ENCODE measurements at regions of chr12 and their contacts with region 1.

Region 1: GRCh38 chr12:27821259-27821973 is 41.4 kb upstream of the MANSC4 start:
- DNase-seq: peak; percentile 28
- H3K4me3 Mint-ChIP-seq: no peak overlapping the region
- H3K27ac Mint-ChIP-seq: no peak overlapping the region
- H3K4me1 Mint-ChIP-seq: peaks cover 43% of the 10 kb centered on the region
- H3K27me3 Mint-ChIP-seq: peaks cover 33% of the 10 kb centered on the region

Region 2: GRCh38 chr12:27367078-27367477 is 454.3 kb before region 1 on chr12:
- CTCF ChIA-PET with region 1: no interaction called
- POLR2A ChIA-PET with region 1: no interaction called
- intact Hi-C with region 1: no loop called
- DNase-seq: no peak
- H3K4me3 Mint-ChIP-seq: no peak overlapping the region
- H3K27ac Mint-ChIP-seq: no peak overlapping the region
- H3K4me1 Mint-ChIP-seq: no peaks in the 10 kb centered on the region
- H3K27me3 Mint-ChIP-seq: peaks cover 5% of the 10 kb centered on the region

Region 3: DNA sequence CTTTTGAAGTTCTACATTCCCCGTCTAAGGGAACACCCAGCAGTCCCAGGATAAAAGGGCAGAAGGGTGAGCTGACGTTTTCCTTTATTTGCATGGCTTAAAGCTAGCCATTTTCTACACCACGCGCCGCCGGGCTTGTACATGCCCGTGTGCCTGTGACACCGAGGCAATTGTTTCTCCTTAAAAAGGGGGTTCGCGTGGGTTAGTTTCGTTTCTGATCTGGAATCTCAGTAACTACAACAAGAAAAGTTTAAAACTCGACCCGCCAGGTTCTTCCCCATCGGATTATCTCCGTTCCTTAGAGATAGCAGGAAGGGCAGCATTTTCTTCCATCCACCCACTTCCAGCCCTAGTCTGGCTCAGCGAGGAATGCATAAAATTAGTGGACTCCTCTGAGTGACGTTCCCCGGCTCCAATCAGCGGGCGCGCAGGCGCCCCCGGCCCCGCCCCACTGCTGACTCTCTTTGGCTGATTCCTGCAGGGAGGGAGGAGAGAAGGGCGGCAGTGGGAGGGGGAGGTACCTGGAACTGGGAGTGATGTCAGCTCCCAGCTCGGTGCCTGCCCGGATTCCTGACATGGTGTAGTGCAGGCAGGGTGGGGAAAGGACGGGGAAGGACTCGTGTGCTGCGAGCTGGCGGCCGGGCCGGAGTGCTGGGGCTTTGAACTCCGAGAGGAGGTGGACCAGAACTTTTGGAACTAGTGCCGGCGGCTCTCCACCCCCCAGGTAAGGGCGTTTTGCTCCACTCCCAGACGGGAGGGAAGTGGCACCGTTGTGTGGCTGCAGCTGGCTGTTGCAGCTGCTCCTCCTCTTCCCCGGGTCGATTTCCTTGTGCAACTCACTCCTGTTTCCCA is 297.5 kb before region 1 on chr12 and contains the start of gene PPFIBP1:
- CTCF ChIA-PET with region 1: no interaction called
- POLR2A ChIA-PET with region 1: no interaction called
- intact Hi-C with region 1: loop called (anchors 5 kb)
- DNase-seq: peak; percentile 99
- H3K4me3 Mint-ChIP-seq: peak within 1 kb of the TSS; percentile 93
- H3K27ac Mint-ChIP-seq: peak within 1 kb of the TSS; percentile 79
- H3K4me1 Mint-ChIP-seq: peaks cover 18% of the 10 kb centered on the region
- H3K27me3 Mint-ChIP-seq: peaks cover 8% of the 10 kb centered on the region
- total RNA-seq, gene PPFIBP1: 14.1 to 14.9 TPM

Region 4: GRCh38 chr12:27785882-27786570 is 35.4 kb before region 1 on chr12:
- CTCF ChIA-PET with region 1: interaction called, 21 read pairs
- POLR2A ChIA-PET with region 1: interaction called, 3 read pairs
- intact Hi-C with region 1: loop called (anchors 1 kb)
- DNase-seq: no peak
- H3K4me3 Mint-ChIP-seq: no peak overlapping the region
- H3K27ac Mint-ChIP-seq: peak overlapping the region; percentile 69
- H3K4me1 Mint-ChIP-seq: peaks cover 45% of the 10 kb centered on the region
- H3K27me3 Mint-ChIP-seq: no peaks in the 10 kb centered on the region

Region 5: GRCh38 chr12:27861428-27862167 is 40.2 kb after region 1 on chr12:
- CTCF ChIA-PET with region 1: interaction called, 11 read pairs
- POLR2A ChIA-PET with region 1: interaction called, 6 read pairs
- intact Hi-C with region 1: loop called (anchors 1 kb)
- DNase-seq: peak; percentile 24
- H3K4me3 Mint-ChIP-seq: no peak overlapping the region
- H3K27ac Mint-ChIP-seq: no peak overlapping the region
- H3K4me1 Mint-ChIP-seq: peaks cover 20% of the 10 kb centered on the region
- H3K27me3 Mint-ChIP-seq: peaks cover under 1% of the 10 kb centered on the region

Region 6: DNA sequence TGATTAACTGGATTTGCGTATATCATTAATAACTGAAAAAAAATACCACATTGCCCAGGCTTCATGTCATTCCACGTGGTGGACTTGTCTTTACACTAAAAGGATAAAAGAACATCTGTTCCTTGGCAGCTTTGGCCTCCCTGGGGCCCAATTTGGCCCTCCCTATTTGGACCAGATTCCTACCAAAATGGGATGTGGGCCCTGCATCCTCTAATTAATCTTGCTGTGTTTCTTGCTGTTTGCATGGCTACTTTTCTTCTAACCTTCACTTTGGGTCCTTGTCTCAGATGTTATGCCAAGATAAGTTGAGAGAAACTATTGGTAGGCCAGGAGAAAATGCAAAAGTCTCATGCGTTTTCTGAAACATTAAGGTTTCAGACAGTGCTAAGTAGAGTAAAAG is 93.6 kb after region 1 on chr12:
- CTCF ChIA-PET with region 1: no interaction called
- POLR2A ChIA-PET with region 1: no interaction called
- intact Hi-C with region 1: no loop called
- DNase-seq: no peak
- H3K4me3 Mint-ChIP-seq: no peak overlapping the region
- H3K27ac Mint-ChIP-seq: no peak overlapping the region
- H3K4me1 Mint-ChIP-seq: no peaks in the 10 kb centered on the region
- H3K27me3 Mint-ChIP-seq: peaks cover 6% of the 10 kb centered on the region

Region 7: GRCh38 chr12:28114488-28114887 is 293.1 kb after region 1 on chr12:
- CTCF ChIA-PET with region 1: no interaction called
- POLR2A ChIA-PET with region 1: no interaction called
- intact Hi-C with region 1: no loop called
- DNase-seq: no peak
- H3K4me3 Mint-ChIP-seq: no peak overlapping the region
- H3K27ac Mint-ChIP-seq: no peak overlapping the region
- H3K4me1 Mint-ChIP-seq: no peaks in the 10 kb centered on the region
- H3K27me3 Mint-ChIP-seq: no peaks in the 10 kb centered on the region

Region 8: DNA sequence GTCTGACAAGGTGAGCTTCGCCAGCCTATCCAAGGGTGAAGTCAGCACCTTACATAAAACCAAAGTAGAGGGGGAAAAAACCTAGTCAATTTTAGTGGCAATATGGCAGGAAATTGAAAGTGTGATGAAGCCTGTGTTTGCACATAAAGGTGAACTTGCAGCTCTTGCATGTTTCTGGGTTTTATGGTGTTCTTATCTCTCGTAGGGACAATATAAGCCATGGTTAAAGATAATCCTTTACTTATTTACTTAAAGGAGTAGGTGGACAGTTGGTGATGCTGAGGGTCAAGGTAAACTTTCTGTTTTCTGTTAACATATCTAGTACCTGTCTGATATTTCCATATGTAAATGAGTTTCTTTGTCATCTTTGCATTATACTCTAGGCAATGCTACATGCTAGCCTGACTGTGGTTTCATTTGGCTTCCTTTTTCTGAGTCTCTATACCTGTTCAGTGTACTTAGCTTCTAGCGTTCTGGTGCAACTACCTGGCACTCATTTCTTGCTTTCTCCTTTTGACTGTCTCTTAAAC is 401.7 kb after region 1 on chr12:
- CTCF ChIA-PET with region 1: no interaction called
- POLR2A ChIA-PET with region 1: no interaction called
- intact Hi-C with region 1: loop called (anchors 1 kb)
- DNase-seq: peak; percentile 16
- H3K4me3 Mint-ChIP-seq: peak overlapping the region; percentile 42
- H3K27ac Mint-ChIP-seq: peak overlapping the region; percentile 76
- H3K4me1 Mint-ChIP-seq: peaks cover 45% of the 10 kb centered on the region
- H3K27me3 Mint-ChIP-seq: no peaks in the 10 kb centered on the region